A549 (cell line): ENCODE measurements at regions of chr14 and their contacts with region 1.

Region 1: DNA sequence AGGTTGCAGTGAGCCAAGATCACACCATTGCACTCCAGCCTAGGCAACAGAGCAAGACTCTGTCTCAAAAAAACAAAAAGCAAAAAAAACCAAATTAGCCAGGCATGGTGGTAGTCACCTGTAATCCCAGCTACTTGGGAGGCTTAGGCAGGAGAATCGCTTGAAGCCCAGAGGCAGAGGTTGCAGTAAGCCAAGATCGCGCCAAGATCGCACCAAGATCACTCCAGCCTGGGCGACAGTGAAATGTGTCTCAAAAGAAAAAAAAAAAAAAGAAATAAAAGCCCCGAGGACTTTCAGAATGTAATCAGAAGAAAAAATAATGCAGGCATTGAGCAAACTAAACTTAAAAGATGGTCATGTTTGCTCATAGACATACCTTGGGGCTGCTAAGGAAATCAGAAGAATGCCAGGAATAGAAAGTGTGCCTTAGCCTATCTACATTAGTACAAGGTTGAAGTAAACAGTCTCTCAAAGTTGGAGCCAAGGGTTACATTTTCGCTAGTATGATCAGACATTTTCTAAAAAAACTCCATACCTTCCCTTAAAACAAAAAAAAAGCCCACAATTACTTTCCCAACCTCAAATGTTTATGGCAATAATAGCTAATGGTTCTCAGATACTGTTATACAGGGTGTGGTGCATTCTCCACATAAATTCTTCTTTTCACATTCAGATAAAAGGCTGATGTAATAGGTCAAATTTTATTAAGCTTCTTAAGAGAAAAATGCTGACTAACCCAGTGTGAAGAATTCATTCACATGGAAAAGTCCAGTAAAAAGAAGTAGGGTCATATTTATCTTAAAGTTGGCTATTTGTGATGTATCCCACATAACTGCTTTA is 15.8 kb downstream of the DTD2 start:
- DNase-seq: peak in 1 of 2 experiments; percentile 88
- ATAC-seq: peak; percentile 89 to 97
- H3K4me3 ChIP-seq: peak overlapping the region; percentile 13; the same call in 1 of the 3 replicates
- H3K27ac ChIP-seq: peak overlapping the region; percentile 82 to 87
- H3K4me1 ChIP-seq: peaks cover 40% of the 10 kb centered on the region
- CTCF ChIP-seq: no peak
- EP300 ChIP-seq: peak; percentile 15 to 69; a peak in 2 of 5 replicates
- POLR2A ChIP-seq: no peak
- RAD21 ChIP-seq: no peak

Region 2: GRCh38 chr14:31456841-31457664 is 15.6 kb after region 1 on chr14 and contains the start of gene DTD2:
- CTCF ChIA-PET with region 1: interaction called, 3 read pairs
- POLR2A ChIA-PET with region 1: interaction called, 27 read pairs
- DNase-seq: peak; percentile 81 to 96
- ATAC-seq: peak; percentile 99
- H3K4me3 ChIP-seq: peak within 1 kb of the TSS; percentile 70
- H3K27ac ChIP-seq: peak within 1 kb of the TSS; percentile 95 to 97
- H3K4me1 ChIP-seq: peaks cover 21% of the 10 kb centered on the region
- CTCF ChIP-seq: no peak
- EP300 ChIP-seq: no peak
- POLR2A ChIP-seq: peak; percentile 96
- RAD21 ChIP-seq: no peak
- polyA plus RNA-seq, gene DTD2: 26.3 and 39.5 TPM in 2 replicates